Activated CD4-positive, alpha-beta T cell treated with anti-CD3 and anti-CD28 coated beads, Interleukin-2, amount 10 ng/mL, durations not matched to agents 24 days and 14 days (primary cell): ENCODE measurements at regions of chr14 and their contacts with region 1.

Region 1: GRCh38 chr14:67285876-67286452 is 44.7 kb downstream of the PALS1 start:
- DNase-seq: no peak
- H3K4me3 Mint-ChIP-seq: no peak overlapping the region
- H3K27ac Mint-ChIP-seq: no peak overlapping the region
- H3K4me1 Mint-ChIP-seq: no peaks in the 10 kb centered on the region
- H3K27me3 Mint-ChIP-seq: no peaks in the 10 kb centered on the region

Region 2: DNA sequence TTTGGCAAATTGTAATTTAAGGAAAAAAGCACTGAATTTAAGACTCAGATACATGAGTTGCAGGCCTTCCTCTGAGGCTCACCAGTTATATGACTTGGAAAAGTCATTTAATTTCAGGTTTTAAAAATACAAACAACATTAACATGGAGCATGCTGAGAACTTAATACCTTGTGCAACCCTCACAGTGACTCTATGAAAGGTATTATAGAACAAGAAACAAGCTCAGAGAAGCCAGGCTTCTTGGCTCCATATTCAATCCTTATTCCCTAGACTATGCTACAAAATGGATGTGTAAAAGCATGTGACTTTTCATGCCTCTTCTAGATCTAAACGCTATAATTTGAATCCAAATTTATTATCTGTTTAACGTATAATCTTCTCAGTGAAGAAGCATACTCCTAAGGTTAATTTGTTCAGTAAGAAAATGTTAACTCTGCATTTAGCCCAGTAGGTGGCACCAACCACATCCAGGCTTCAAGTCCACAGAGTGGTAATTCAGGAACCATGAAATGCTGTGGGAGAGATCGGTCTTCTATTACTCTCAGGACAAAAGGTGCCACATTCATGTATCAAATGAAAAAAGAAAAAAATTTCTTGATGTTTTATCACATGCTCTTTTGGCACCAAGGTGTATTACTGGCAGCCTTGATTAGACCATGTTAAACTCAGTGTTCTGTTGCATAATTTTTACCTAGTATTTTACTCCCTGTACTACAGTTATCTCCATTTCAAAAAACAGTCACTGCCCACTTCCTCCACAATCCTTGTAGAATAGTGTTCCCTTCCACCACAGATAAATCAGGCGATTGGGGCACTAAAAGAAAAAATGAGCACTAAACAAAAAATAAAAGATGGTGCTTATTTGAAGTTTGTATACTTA is 790.5 kb before region 1 on chr14:
- intact Hi-C with region 1: loop called (anchors 10 kb)
- DNase-seq: peak; percentile 79
- H3K4me3 Mint-ChIP-seq: no peak overlapping the region
- H3K27ac Mint-ChIP-seq: no peak overlapping the region
- H3K4me1 Mint-ChIP-seq: peaks cover 22% of the 10 kb centered on the region
- H3K27me3 Mint-ChIP-seq: peaks cover 6% of the 10 kb centered on the region

Region 3: DNA sequence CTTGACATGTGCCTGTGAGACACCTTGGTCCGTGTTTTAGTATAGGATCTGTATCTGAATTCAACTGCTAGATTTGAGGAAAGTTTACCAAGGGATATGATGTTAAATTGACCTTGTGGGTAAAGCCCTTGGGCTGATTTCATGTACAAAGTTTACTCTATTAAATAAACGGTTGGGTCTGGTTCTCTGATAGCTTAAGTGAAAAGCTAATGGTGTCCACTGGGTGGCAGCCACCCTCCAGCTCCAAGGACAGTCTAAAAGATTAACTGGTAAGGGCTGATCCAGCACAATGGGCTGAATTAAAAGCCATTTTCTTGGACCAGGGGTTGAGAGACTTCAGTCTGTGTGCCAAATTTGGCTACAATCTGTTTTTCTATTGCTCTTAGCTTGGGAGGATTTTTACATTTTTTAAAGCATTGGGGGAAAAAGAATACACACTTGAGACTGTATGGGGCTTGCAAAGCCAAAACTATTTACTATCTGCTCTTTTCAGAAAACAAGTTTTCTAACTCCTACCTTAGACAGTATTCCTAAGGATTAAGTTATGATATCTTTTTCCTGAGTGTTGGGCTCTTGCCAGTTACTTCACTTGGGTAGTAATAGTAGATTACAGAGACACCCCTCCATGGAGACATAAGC is 661.5 kb before region 1 on chr14:
- intact Hi-C with region 1: loop called (anchors 5 kb)
- DNase-seq: peak; percentile 78
- H3K4me3 Mint-ChIP-seq: no peak overlapping the region
- H3K27ac Mint-ChIP-seq: no peak overlapping the region
- H3K4me1 Mint-ChIP-seq: no peaks in the 10 kb centered on the region
- H3K27me3 Mint-ChIP-seq: no peaks in the 10 kb centered on the region

Region 4: GRCh38 chr14:67166450-67166853 is 119.5 kb before region 1 on chr14:
- intact Hi-C with region 1: loop called (anchors 1 kb)
- DNase-seq: peak; percentile 78
- H3K4me3 Mint-ChIP-seq: no peak overlapping the region
- H3K27ac Mint-ChIP-seq: no peak overlapping the region
- H3K4me1 Mint-ChIP-seq: peaks cover 5% of the 10 kb centered on the region
- H3K27me3 Mint-ChIP-seq: no peaks in the 10 kb centered on the region

Region 5: DNA sequence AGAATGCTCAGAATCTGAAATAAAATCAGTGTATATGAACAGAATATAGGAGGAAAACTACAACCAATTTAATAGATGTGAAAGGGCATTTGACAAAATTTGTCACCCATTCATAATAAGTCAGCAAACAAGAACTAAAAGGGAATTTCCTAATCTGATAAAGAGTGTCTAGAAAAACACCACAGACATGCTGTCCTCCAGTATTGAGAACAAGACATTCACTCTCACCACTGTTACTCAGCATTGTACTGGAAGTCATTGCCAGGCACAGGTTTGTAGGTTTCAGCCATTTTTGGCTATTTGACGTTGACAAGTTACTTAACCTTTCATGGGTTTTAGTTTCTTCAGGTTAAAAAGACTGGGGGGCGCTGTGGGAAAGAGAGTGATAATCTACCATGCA is 87.4 kb after region 1 on chr14:
- intact Hi-C with region 1: no loop called
- DNase-seq: no peak
- H3K4me3 Mint-ChIP-seq: no peak overlapping the region
- H3K27ac Mint-ChIP-seq: peak overlapping the region; percentile 85
- H3K4me1 Mint-ChIP-seq: peaks cover 17% of the 10 kb centered on the region
- H3K27me3 Mint-ChIP-seq: no peaks in the 10 kb centered on the region